CD14-positive monocyte (primary cell): ENCODE measurements at regions of chr5 and their contacts with region 1.

Region 1: DNA sequence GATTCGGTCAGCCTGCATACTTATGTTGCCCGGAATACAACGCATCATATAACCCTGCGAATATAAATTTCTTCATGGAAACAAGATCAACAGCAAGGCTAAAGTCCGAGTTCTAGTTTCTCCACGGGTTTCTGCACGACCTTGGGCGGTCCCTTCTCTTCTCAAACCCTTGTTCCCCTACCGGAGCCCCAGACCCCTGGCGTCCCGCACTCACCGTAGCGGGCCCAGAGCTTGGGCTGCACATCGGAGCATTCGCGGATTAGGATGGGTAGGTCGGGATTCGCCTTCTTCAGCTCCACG is 438 bp downstream of the NDUFA2 start:
- DNase-seq: no peak
- H3K4me3 ChIP-seq: peak overlapping the region; percentile 65 to 94 (median 70)
- H3K4me3 Mint-ChIP-seq: peak overlapping the region; percentile 98 to 99
- H3K27ac ChIP-seq: peak overlapping the region; percentile 79 to 95
- H3K27ac Mint-ChIP-seq: peak overlapping the region; percentile 96 to 100 (median 99)
- H3K4me1 ChIP-seq: peaks cover 17 to 23% of the 10 kb centered on the region in 2 donors
- H3K4me1 Mint-ChIP-seq: peaks cover 15% of the 10 kb centered on the region
- H3K27me3 ChIP-seq: no peaks in the 10 kb centered on the region
- H3K27me3 Mint-ChIP-seq: peaks cover 0 to 3% (median 1%) of the 10 kb centered on the region in 3 donors
- CTCF ChIP-seq: no peak

Region 2: DNA sequence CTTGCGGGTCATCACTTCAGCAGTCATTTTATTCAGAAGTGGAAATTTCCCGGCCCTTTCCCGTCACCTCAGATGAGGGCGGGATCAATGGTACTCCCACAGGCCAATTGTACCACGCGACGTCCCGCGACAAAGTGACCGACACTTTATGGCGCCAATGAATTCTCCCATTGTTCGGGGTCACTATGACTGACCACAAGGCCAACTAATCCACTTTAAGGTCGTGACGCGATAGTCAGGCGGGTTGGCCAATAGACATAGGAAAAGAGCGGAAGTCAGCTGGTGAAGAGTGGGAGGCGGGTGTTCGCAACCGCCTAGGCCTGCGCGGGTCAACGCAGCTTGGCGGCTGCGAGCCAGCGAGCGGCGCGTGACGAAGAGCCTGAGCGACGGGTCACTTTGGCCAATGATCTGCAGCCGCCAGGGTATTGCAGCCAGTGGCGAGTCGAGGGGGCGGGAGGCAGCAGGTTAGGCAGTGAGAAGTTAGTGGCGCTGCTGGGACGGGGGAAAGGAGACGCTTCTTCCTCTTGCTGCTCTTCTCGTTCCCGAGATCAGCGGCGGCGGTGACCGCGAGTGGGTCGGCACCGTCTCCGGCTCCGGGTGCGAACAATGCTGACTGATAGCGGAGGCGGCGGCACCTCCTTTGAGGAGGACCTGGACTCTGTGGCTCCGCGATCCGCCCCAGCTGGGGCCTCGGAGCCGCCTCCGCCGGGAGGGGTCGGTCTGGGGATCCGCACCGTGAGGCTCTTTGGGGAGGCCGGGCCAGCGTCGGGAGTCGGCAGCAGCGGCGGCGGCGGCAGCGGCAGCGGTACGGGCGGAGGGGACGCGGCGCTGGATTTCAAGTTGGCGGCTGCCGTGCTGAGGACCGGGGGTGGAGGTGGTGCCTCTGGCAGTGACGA is 245.4 kb before region 1 on chr5 and contains the start of gene ANKHD1:
- intact Hi-C with region 1: loop called in 1 of 2 experiments (anchors 5 kb)
- DNase-seq: peak; percentile 100
- H3K4me3 ChIP-seq: peak within 1 kb of the TSS; percentile 67 to 87 (median 86)
- H3K4me3 Mint-ChIP-seq: no peak within 1 kb of the TSS
- H3K27ac ChIP-seq: peak within 1 kb of the TSS; percentile 94
- H3K27ac Mint-ChIP-seq: peak within 1 kb of the TSS in 2 of 7 donors; percentile 92 to 93
- H3K4me1 ChIP-seq: peaks cover 23 to 32% of the 10 kb centered on the region in 2 donors
- H3K4me1 Mint-ChIP-seq: peaks cover 32% of the 10 kb centered on the region
- H3K27me3 ChIP-seq: no peaks in the 10 kb centered on the region
- H3K27me3 Mint-ChIP-seq: no peaks in the 10 kb centered on the region
- CTCF ChIP-seq: no peak
- polyA plus RNA-seq, gene ANKHD1: 29.0 to 110 (median 43.6) TPM

Region 3: DNA sequence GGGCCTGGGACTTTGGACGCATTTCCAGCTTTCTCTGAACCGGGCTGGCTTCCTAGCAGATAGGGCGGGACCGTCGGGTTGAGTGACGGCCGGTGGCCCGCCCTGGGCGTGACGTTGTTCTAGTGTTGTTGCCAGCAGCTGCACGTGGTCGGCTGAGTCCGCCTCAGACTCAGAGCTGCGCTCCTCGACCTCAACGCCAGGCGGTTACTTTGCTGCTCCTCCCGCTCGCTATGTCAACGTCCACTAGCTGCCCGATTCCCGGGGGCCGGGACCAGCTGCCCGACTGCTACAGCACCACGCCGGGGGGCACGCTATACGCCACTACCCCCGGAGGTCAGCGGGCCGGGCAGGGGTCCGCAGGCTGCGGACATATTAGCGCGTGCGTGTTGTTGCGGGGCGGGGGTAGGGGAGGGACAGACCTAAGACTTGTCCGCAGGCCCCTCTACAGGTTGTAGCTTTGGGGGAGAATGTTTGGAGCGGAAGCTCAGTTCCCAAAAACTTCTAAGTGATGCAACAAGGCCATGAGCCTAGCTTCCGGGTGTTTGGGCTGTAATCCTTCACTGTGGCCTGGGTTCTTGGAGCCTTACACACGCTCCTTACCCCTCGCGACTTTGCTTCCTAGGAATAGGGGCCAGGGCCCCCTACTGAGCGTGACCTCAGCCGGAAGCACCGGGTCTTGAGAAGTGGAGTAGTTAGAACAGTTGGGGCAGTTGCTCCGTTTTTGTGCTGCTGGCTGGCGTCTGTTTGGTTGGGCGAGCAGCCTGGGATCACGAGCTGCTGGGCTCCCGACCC is 99.3 kb before region 1 on chr5 and contains the start of gene EIF4EBP3:
- intact Hi-C with region 1: loop called in 1 of 2 experiments (anchors 5 kb)
- DNase-seq: peak; percentile 96 to 97 (median 96)
- H3K4me3 ChIP-seq: peak within 1 kb of the TSS; percentile 36 to 76 (median 69)
- H3K4me3 Mint-ChIP-seq: peak within 1 kb of the TSS; percentile 86 to 94
- H3K27ac ChIP-seq: peak within 1 kb of the TSS; percentile 91 to 98
- H3K27ac Mint-ChIP-seq: peak within 1 kb of the TSS; percentile 95 to 99 (median 98)
- H3K4me1 ChIP-seq: peaks cover 35 to 49% of the 10 kb centered on the region in 2 donors
- H3K4me1 Mint-ChIP-seq: peaks cover 44% of the 10 kb centered on the region
- H3K27me3 ChIP-seq: no peaks in the 10 kb centered on the region
- H3K27me3 Mint-ChIP-seq: no peaks in the 10 kb centered on the region
- CTCF ChIP-seq: peak; percentile 79
- polyA plus RNA-seq, gene EIF4EBP3: 22.8 to 46.0 (median 41.9) TPM

Region 4: DNA sequence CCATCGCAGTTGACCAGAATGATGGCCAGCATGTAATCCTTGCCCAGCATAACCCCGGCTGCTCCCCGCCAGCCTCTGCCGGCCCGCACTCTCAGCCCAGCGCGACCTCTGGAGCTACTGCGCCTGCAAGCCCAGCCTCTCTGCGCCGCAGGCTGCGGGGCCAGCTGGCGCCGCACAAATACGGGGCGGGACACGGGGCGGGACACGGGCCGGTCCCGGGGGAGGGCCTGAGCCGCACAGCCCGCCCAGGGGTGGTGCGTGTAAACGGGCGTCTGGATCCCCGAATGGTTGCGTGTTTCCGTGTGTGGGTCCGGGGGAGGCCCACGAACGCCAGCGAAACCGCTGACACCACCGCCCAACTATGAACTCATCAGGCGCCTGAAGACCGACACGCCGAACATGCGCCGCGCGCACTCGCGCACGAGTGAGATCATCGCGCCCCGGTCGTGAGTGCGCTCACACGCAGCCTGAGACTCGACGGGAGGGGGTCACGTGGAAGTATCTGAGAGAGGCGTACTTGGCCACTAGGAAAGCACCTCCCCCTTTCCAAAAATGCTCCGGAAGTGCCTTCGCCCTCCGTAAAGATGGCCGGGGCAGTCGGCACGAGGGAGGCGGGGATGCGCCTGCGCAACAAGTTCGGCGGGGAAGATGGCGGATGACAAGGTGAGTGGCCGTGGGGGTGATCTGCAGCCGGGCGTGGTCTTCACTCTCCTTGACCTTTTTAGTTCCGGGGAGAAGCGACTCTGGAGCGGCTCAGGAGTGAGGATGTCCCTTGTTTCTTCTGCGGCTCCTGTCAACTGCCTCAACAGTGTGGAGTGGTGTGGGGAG is 82.6 kb before region 1 on chr5 and contains the starts of genes APBB3 and SLC35A4:
- intact Hi-C with region 1: loop called in 1 of 2 experiments (anchors 5 kb)
- DNase-seq: peak; percentile 99 to 100 (median 100)
- H3K4me3 ChIP-seq: peak within 1 kb of the TSS; percentile 77 to 87 (median 83)
- H3K4me3 Mint-ChIP-seq: peak within 1 kb of the TSS; percentile 91 to 98
- H3K27ac ChIP-seq: peak within 1 kb of the TSS; percentile 92
- H3K27ac Mint-ChIP-seq: peak within 1 kb of the TSS; percentile 97 to 99 (median 98)
- H3K4me1 ChIP-seq: peaks cover 33 to 65% of the 10 kb centered on the region in 2 donors
- H3K4me1 Mint-ChIP-seq: peaks cover 58% of the 10 kb centered on the region
- H3K27me3 ChIP-seq: no peaks in the 10 kb centered on the region
- H3K27me3 Mint-ChIP-seq: peaks cover 0 to 2% (median 2%) of the 10 kb centered on the region in 3 donors
- CTCF ChIP-seq: no peak
- polyA plus RNA-seq, gene APBB3: 4.9 to 211 (median 7.4) TPM
- polyA plus RNA-seq, gene SLC35A4: 44.0 to 67.1 (median 58.8) TPM

Region 5: DNA sequence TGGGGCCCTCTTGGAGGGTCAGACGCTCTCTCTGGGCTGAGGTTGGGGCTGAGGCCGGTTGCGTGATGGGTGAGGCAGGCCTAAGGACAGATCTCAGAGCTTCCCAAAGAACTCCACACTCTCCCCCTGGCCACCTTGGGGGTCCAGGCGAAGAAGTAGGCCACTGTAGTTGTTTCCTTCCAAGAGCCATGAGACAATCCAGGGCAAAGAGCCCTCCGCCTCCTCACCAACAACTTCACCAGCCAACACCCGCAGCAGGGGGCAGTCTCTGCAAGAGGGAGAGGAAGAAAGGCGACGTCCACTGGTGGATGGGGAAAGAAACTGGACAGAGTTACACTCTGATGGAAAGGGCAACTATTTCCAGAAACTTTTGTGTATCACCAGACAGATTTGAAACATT is 71.7 kb before region 1 on chr5:
- intact Hi-C with region 1: no loop called
- DNase-seq: peak; percentile 71 to 82 (median 71)
- H3K4me3 ChIP-seq: no peak overlapping the region
- H3K4me3 Mint-ChIP-seq: no peak overlapping the region
- H3K27ac ChIP-seq: peak overlapping the region in 1 of 2 donors; percentile 39
- H3K27ac Mint-ChIP-seq: peak overlapping the region in 6 of 7 donors; percentile 14 to 87 (median 66)
- H3K4me1 ChIP-seq: peaks cover 22 to 42% of the 10 kb centered on the region in 2 donors
- H3K4me1 Mint-ChIP-seq: peaks cover 35% of the 10 kb centered on the region
- H3K27me3 ChIP-seq: no peaks in the 10 kb centered on the region
- H3K27me3 Mint-ChIP-seq: peaks cover 0 to 2% (median 2%) of the 10 kb centered on the region in 3 donors
- CTCF ChIP-seq: peak; percentile 84

Region 6: DNA sequence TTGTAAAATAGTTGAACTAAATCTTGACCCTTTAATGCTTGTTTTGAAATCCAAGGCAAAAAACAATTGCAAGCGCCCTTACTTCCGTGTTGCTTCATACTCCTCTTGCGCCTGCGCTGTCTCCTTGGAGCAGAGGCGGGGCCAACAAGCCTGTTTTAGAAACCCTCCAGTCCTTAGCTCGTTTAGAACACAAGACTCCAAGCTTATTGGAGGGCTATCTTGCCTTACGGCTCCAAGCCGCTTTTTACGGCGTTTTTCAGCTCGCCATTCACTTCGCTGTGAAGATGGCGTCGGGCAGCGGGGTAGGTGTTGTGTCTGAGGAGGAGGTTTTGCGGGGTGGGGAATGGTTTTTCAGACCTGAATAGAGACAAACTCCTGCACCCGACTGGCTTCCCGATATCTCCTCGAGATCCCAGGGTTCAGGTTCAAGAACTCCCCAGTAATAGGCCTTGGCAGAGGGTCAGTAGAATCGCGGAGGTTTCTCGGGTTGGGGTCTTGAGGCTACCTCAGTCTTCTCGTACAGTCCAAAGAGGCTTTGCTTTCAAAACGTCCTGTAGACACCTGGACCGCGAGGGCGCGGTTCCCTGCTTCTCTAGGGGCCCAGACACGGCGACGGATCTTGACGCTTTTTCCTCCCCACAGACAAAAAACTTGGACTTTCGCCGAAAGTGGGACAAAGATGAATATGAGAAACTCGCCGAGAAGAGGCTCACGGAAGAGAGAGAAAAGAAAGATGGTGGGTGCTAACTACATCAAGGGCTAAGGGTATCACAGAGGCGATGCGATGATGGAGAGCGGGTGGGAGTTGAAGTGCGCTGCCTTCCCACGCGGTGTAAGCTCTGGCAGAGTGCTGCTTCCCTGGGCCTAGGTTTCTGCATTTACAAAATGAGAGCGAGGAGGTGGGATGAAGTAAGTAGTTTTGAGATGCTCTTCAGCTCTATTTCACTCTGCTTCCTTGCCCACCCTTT is 53.5 kb after region 1 on chr5 and contains the start of gene ZMAT2:
- intact Hi-C with region 1: loop called (anchors 5 to 10 kb)
- DNase-seq: peak; percentile 95 to 99 (median 98)
- H3K4me3 ChIP-seq: peak within 1 kb of the TSS; percentile 74 to 89 (median 88)
- H3K4me3 Mint-ChIP-seq: peak within 1 kb of the TSS; percentile 96 to 99
- H3K27ac ChIP-seq: peak within 1 kb of the TSS; percentile 74 to 90
- H3K27ac Mint-ChIP-seq: peak within 1 kb of the TSS; percentile 94 to 97 (median 97)
- H3K4me1 ChIP-seq: peaks cover 18 to 22% of the 10 kb centered on the region in 2 donors
- H3K4me1 Mint-ChIP-seq: peaks cover 19% of the 10 kb centered on the region
- H3K27me3 ChIP-seq: no peaks in the 10 kb centered on the region
- H3K27me3 Mint-ChIP-seq: no peaks in the 10 kb centered on the region
- CTCF ChIP-seq: no peak
- polyA plus RNA-seq, gene ZMAT2: 22.5 to 59.5 (median 52.5) TPM